ENCODE measurements at regions of chr6 and their contacts with region 1.

Region 1: GRCh38 chr6:104789770-104790190 is 69.9 kb downstream of the HACE1 start:
- DNase-seq: peak; percentile 31
- ATAC-seq: peak; percentile 90
- H3K4me3 Mint-ChIP-seq: peak overlapping the region; percentile 57
- H3K27ac Mint-ChIP-seq: peak overlapping the region; percentile 97
- H3K4me1 Mint-ChIP-seq: peaks cover 26% of the 10 kb centered on the region
- H3K27me3 Mint-ChIP-seq: no peaks in the 10 kb centered on the region
- CTCF ChIP-seq: no peak

Region 2: GRCh38 chr6:104705095-104705707 is 84.6 kb before region 1 on chr6:
- CTCF ChIA-PET with region 1: no interaction called
- POLR2A ChIA-PET with region 1: no interaction called
- intact Hi-C with region 1: no loop called
- DNase-seq: peak; percentile 53
- ATAC-seq: peak; percentile 58
- H3K4me3 Mint-ChIP-seq: no peak overlapping the region
- H3K27ac Mint-ChIP-seq: no peak overlapping the region
- H3K4me1 Mint-ChIP-seq: peaks cover 21% of the 10 kb centered on the region
- H3K27me3 Mint-ChIP-seq: no peaks in the 10 kb centered on the region
- CTCF ChIP-seq: no peak

Region 3: GRCh38 chr6:104859225-104860146 is 69.7 kb after region 1 on chr6 and contains the start of gene HACE1:
- CTCF ChIA-PET with region 1: interaction called, 13 read pairs
- POLR2A ChIA-PET with region 1: no interaction called
- intact Hi-C with region 1: no loop called
- DNase-seq: peak; percentile 94
- ATAC-seq: peak; percentile 99
- H3K4me3 Mint-ChIP-seq: peak within 1 kb of the TSS; percentile 96
- H3K27ac Mint-ChIP-seq: peak within 1 kb of the TSS; percentile 85
- H3K4me1 Mint-ChIP-seq: peaks cover 21% of the 10 kb centered on the region
- H3K27me3 Mint-ChIP-seq: peaks cover 9% of the 10 kb centered on the region
- CTCF ChIP-seq: no peak
- total RNA-seq, gene HACE1: 14.5 to 17.5 TPM

Measured in activated CD8-positive, alpha-beta T cell treated with anti-CD3 and anti-CD28 coated beads for 36 hours (primary cell).